Activated CD4-positive, alpha-beta memory T cell treated with anti-CD3 and anti-CD28 coated beads, Interleukin-2, amount 10 ng/mL, durations not matched to agents 7 days and 5 days (primary cell): ENCODE measurements at regions of chr6 and their contacts with region 1.

Region 1: DNA sequence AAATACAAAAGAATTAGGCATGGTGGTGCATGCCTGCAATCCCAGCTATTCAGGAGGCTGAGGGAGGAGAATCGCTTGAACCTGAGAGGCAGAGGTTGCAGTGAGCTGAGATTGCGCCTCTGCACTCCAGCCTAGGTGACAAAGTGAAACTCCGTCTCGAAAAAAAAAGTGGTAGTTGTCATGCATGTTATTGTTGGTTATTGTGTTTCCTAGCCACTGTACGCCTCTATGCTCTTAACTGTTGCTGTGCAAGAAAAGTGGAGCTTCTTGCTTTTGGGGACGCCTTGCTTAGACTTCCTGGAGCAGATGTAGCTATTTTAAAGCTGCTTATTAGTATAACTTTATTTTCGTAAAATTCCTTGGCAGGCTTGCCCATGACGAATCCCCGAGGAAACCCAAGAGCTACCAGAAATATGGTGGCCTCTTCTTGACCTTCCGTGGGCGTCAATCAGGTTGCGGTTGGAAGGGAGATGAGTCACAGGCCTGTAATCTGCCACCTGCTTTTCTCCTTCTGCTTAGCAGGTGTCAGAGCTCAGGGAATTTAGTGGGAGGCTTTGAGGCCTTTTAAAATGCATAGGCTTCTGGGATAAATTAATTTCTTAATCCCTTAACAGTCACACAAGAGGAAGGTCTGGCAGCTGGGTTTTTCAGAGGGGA is 17.3 kb downstream of the GABRR2 start:
- DNase-seq: peak; percentile 86
- H3K4me3 Mint-ChIP-seq: peak overlapping the region; percentile 65
- H3K27ac Mint-ChIP-seq: peak overlapping the region; percentile 87
- H3K4me1 Mint-ChIP-seq: peaks cover 30% of the 10 kb centered on the region
- H3K27me3 Mint-ChIP-seq: no peaks in the 10 kb centered on the region

Region 2: GRCh38 chr6:89145787-89146646 is 151.8 kb before region 1 on chr6 and contains the start of gene PM20D2:
- CTCF ChIA-PET with region 1: no interaction called
- POLR2A ChIA-PET with region 1: interaction called, 16 read pairs
- DNase-seq: peak; percentile 57
- H3K4me3 Mint-ChIP-seq: peak within 1 kb of the TSS; percentile 82
- H3K27ac Mint-ChIP-seq: peak within 1 kb of the TSS; percentile 73
- H3K4me1 Mint-ChIP-seq: peaks cover 34% of the 10 kb centered on the region
- H3K27me3 Mint-ChIP-seq: peaks cover 28% of the 10 kb centered on the region
- total RNA-seq, gene PM20D2: 5.0 to 5.5 TPM

Region 3: GRCh38 chr6:89287351-89288028 is 10.3 kb before region 1 on chr6:
- CTCF ChIA-PET with region 1: interaction called, 8 read pairs
- POLR2A ChIA-PET with region 1: interaction called, 12 read pairs
- DNase-seq: no peak
- H3K4me3 Mint-ChIP-seq: no peak overlapping the region
- H3K27ac Mint-ChIP-seq: no peak overlapping the region
- H3K4me1 Mint-ChIP-seq: no peaks in the 10 kb centered on the region
- H3K27me3 Mint-ChIP-seq: no peaks in the 10 kb centered on the region

Region 4: DNA sequence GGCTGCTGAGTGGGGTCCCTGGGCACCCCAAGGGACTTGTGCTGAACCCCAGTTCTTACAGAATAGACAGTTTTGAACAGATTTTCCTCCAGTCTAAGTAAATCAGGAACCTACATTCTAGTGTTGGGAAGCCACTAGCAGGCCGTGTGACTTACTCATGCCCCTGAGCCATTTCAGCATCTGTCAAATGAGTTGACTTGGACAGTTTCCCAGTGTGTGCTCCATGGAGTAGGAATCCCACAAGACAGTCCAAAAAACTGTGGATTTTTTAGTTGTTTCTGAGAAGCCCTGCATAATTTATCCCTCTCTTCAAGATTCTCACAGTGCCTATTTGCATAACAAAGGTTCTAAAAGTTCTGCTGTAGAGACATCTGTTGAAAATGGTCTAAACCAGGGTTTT is 15.2 kb after region 1 on chr6:
- CTCF ChIA-PET with region 1: no interaction called
- POLR2A ChIA-PET with region 1: no interaction called
- DNase-seq: no peak
- H3K4me3 Mint-ChIP-seq: no peak overlapping the region
- H3K27ac Mint-ChIP-seq: no peak overlapping the region
- H3K4me1 Mint-ChIP-seq: no peaks in the 10 kb centered on the region
- H3K27me3 Mint-ChIP-seq: peaks cover 4% of the 10 kb centered on the region

Region 5: GRCh38 chr6:89352278-89353117 is 54.7 kb after region 1 on chr6 and contains the start of gene UBE2J1:
- CTCF ChIA-PET with region 1: interaction called, 12 read pairs
- POLR2A ChIA-PET with region 1: interaction called, 64 read pairs
- DNase-seq: peak; percentile 82
- H3K4me3 Mint-ChIP-seq: peak within 1 kb of the TSS; percentile 90
- H3K27ac Mint-ChIP-seq: peak within 1 kb of the TSS; percentile 88
- H3K4me1 Mint-ChIP-seq: peaks cover 68% of the 10 kb centered on the region
- H3K27me3 Mint-ChIP-seq: no peaks in the 10 kb centered on the region
- total RNA-seq, gene UBE2J1: 36.9 to 37.2 TPM